ENCODE measurements at regions of chr1 and their contacts with region 1.

Region 1: GRCh38 chr1:24830680-24831272 is 85.5 kb downstream of the CLIC4 start:
- DNase-seq: no peak
- ATAC-seq: peak; percentile 83

Region 2: DNA sequence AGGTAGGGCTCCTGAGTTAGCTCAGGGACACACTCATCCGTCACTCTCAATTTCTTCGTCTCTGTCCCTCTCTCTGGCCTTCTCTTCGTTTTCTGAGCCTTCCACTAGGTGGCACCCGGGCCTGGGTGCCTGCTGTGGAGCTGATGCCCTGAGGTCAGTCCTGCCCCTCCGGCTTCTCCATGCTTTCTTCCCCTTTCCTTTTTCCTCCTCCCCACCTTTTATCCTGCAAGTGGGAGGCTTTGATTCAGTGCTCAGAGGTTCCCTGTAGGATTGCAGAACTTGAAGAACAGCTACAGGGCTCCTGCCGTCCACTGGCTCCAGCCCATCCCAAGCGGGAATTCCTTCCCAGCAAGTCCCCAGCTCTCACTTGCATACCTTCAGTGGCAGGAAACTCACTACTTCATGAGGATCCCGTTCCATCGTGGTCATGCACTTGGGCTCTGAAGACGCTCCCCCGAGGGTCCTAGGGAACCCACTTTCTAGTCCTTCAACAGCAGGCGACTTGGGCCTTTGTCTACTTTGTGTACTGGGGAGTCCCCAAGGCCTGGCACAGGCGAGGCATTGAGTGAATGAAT is 142.1 kb before region 1 on chr1:
- intact Hi-C with region 1: loop called (anchors 2 kb)
- DNase-seq: peak; percentile 87
- ATAC-seq: peak; percentile 85

Region 3: GRCh38 chr1:24744911-24745710 is 85.7 kb before region 1 on chr1 and contains the start of gene CLIC4:
- intact Hi-C with region 1: loop called (anchors 2 kb)
- DNase-seq: peak; percentile 100
- ATAC-seq: peak; percentile 96
- total RNA-seq, gene CLIC4: 406 TPM

Region 4: DNA sequence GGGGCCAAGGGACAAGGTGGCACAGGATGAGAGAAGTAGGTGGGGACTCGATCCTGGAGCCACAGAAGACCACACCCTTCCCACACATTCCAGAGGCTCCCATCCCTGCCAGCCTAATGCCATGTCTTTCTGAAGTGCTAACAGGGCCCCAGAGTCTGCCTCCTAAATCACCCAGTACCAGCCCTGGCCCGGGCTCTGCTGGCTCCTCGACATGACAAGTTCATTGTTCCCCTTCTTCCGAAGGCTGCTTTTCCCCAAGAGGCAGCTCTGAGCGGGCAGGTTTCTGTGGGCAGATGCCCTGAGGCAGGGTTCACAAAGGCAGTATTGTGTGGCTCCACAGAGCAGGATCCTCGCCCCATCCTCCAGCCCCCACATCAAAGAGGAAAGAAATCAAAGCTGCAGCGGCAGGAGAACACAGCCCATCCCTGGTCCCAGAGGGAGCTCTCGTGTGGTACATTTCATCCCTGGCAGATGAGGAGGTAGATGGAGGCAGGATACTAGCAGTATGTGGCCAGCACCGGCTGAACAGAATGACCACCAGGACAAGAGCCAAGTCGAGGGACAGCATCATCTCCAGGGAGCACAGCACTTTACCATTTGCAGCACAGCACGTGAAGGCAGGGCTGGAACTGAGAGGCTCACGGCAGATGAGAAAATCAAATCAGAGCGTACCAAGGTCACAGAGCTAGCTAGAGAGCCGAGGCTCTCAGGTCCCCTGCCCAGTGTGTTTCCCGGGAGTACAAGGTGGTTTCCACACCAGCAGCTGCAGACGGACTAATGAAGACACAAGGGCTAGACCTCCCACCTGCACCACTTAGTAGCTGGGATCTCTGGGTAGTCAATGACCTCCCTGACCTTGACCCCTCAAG is 336.8 kb after region 1 on chr1:
- intact Hi-C with region 1: no loop called
- DNase-seq: no peak
- ATAC-seq: no peak

Measured in Right ventricle myocardium inferior (tissue), 1 donor.